ENCODE measurements at regions of chr20 and their contacts with region 1.

Region 1: GRCh38 chr20:36439040-36439730 is 102.1 kb upstream of the MYL9 start:
- DNase-seq: peak; percentile 65 to 90
- H3K4me3 ChIP-seq: no peak overlapping the region
- H3K4me1 ChIP-seq: peaks cover 6% of the 10 kb centered on the region
- H3K27me3 ChIP-seq: no peaks in the 10 kb centered on the region

Region 2: DNA sequence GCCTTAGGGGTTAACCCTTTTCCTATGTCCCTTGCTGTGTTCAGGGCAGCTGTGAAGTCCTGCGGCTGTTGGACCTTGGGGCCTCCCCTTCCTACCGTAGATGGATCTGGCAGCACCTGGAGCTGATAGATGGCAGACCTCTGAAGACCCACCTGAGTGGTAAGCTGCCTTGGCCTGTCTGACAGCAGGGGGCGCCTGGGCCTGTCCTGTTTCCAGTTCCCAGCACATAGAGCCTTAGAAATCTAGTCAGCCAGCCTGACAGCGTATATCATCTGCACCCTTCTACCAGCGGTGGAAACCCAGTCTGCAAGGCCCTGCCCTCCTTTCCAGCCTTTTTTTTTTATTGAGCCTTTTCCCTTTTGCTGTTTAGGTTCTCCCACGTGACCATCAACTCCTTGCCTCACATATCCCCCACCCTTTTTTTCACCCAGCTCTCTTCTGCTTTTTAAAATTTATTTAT is 444.2 kb before region 1 on chr20:
- in situ Hi-C with region 1: loop called (anchors 25 kb)
- DNase-seq: peak; percentile 82 to 92
- H3K4me3 ChIP-seq: no peak overlapping the region
- H3K4me1 ChIP-seq: no peaks in the 10 kb centered on the region; the same call in 1 of the 2 replicates
- H3K27me3 ChIP-seq: peaks cover 4% of the 10 kb centered on the region

Region 3: DNA sequence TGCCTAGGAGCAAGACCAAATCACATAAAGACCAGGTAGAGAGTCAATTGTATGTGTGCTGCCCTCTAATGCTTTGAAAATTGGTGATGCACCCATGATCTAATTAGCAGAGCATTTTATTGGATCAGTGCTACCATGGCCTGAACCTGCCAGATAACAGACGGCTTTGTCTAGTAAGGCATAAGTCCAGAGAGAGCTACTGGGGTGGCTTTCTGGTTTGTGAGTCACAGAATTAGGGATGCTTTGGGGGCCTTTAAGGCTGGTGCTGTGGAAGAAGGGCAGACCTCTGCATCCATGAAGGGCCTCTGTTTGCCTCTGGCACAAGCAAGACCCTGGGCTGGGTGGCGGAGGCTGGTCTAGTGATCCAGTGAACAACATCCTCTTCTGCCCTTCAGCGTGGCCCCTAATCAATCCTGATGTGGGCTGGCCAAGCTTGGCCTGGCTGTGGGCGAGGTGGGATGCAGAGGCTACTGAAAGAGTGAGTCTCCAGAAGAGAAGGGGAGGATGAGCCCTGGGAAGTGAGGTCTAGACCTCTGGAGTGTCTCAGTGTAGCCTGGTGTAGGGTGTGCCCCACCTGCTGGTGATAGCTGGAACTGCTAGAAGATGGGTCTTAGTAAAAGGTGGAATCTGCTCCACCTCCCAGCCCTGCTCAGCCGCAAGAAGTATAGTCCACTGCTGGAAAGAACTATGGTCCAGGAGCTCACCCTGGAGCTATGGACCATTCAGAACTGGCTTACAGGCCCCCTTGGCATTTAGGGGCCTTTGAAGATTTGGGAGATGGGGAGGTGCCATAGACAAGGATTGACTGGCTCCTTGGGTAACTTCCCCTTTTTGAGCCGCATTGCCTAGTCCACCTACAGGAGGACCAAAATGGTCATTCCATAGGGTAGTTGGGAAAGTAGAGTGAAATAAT is 239.6 kb before region 1 on chr20:
- in situ Hi-C with region 1: loop called (anchors 5 kb)
- DNase-seq: peak; percentile 63 to 89
- H3K4me3 ChIP-seq: no peak overlapping the region
- H3K4me1 ChIP-seq: no peaks in the 10 kb centered on the region
- H3K27me3 ChIP-seq: no peaks in the 10 kb centered on the region

Measured in HAP-1 (cell line).